ENCODE measurements at regions of chrX and their contacts with region 1.

Region 1: DNA sequence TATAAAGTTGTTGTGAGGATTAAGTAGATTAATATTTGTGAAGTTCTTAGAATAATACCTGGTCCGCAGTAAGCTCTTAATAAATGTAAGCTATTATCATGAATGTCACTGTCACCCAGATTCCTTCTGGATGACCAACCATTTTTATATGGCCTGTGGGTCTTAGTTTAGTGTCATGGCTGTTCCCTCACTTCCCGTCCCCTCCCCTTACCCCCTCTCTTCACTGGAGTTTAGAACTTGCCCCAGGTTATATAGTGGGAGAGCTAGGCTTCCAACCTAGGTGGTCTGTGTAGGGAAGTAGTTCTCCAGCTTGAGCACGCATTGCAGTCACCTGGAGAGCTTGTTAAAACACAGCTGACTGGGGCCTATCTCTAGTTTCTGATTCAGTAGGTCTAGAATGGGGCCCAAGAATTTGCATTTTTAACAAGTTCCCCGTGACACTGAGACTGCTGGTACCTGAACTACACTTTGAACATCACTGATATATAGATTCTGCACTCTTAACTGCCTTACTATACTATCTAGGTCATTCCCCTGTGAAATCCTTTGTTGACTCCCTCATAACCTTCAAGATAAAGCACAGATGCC is 66.9 kb upstream of the PLAC1 start:
- DNase-seq: no peak
- ATAC-seq: no peak
- H3K4me3 ChIP-seq: no peak overlapping the region
- H3K27ac ChIP-seq: no peak overlapping the region
- H3K4me1 ChIP-seq: peaks cover 8% of the 10 kb centered on the region; the same call in 1 of the 2 replicates
- H3K27me3 ChIP-seq: no peaks in the 10 kb centered on the region
- CTCF ChIP-seq: no peak

Region 2: GRCh38 chrX:134547047-134547679 is 178.0 kb before region 1 on chrX:
- CTCF ChIA-PET with region 1: interaction called, 12 read pairs
- POLR2A ChIA-PET with region 1: no interaction called
- in situ Hi-C with region 1: no loop called
- intact Hi-C with region 1: no loop called
- DNase-seq: no peak
- ATAC-seq: no peak
- H3K4me3 ChIP-seq: peak overlapping the region; percentile 7 to 83; a peak in 2 of 4 replicates
- H3K27ac ChIP-seq: no peak overlapping the region
- H3K4me1 ChIP-seq: peaks cover 27% of the 10 kb centered on the region
- H3K27me3 ChIP-seq: no peaks in the 10 kb centered on the region
- CTCF ChIP-seq: no peak

Region 3: DNA sequence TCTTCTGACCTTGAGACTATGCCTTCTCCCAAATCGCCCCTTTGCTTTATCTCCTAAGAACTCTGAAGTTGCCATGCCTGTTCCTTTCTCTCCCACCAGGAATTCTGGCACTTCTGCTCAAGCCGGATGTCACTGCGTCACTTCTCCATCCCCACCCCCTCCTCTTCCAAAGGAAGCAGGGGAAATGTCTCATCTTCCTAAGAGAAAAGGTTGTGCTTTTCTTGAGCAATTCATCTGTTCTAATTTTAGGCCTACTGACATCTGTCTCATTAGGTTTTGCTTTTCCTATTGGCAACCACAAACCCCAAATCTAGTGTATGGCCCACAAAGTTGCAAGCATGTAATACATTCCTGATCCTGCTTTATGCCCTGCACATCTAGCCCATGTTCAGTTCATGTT is 96.2 kb after region 1 on chrX:
- CTCF ChIA-PET with region 1: no interaction called
- POLR2A ChIA-PET with region 1: no interaction called
- in situ Hi-C with region 1: no loop called
- intact Hi-C with region 1: no loop called
- DNase-seq: no peak
- ATAC-seq: no peak
- H3K4me3 ChIP-seq: no peak overlapping the region
- H3K27ac ChIP-seq: no peak overlapping the region
- H3K4me1 ChIP-seq: no peaks in the 10 kb centered on the region
- H3K27me3 ChIP-seq: no peaks in the 10 kb centered on the region
- CTCF ChIP-seq: no peak